Heart right ventricle (tissue), 16 donors: ENCODE measurements at regions of chr6 and their contacts with region 1.

Region 1: DNA sequence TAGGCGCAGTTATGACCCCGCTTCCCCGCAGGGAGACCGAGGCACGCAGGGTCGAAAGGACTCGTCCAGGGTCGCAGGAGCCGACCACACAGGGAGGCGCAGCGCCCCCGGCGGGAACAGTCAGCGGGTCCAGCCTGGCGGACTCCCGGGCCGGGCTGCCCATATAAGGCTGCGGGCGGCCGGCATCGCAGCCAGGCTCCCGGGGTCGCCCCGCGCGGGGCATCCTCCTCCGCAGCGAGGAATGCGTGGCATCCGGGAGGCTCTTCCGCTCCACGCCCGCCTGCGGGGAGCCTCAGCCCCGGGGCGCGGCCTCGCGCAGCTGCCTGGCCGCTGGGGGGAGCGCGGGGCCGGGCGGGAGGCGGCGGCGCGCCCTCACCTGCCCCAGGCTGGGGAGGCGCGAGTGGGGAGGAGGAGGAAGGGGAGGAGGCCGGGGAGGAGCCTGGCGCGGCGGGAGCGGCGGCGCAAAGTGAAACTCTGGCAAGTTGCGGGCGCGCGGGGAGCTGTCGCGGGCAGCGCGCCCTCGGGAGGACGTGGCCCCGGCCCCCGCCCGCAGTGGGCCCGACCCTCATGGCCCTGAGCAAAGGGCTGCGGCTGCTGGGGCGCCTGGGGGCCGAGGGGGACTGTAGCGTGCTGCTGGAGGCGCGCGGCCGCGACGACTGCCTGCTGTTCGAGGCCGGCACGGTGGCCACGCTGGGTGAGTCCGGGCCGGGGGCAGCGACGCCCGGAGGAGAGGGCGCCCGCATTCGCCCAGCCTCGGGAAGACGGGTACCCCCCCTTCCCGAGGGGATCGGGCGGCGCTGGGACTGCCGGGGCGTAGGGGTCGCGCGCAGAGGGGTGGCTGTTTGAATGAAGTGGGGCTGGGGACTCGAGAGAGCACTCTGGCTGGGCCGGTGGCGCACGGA is at the start of gene SYNJ2:
- DNase-seq: peak; percentile 78
- ATAC-seq: peak; percentile 84 to 91 (median 88)
- H3K4me3 ChIP-seq: peak within 1 kb of the TSS; percentile 71 to 99 (median 92)
- H3K27ac ChIP-seq: peak within 1 kb of the TSS; percentile 1 to 89 (median 84)
- H3K4me1 ChIP-seq: peaks cover 0 to 45% (median 10%) of the 10 kb centered on the region in 9 donors
- H3K27me3 ChIP-seq: peaks cover 0 to 5% (median 0%) of the 10 kb centered on the region in 7 donors
- CTCF ChIP-seq: peak; percentile 31 to 77 (median 59)
- total RNA-seq, gene SYNJ2: 14.0 to 27.8 (median 19.6) TPM

Region 2: GRCh38 chr6:158026054-158026900 is 44.6 kb after region 1 on chr6:
- intact Hi-C with region 1: loop called in 5 of 10 experiments (anchors 5 to 10 kb)
- DNase-seq: peak; percentile 81 to 92
- ATAC-seq: peak; percentile 80 to 89 (median 84)
- H3K4me3 ChIP-seq: peak overlapping the region in 7 of 10 donors; percentile 0 to 31 (median 27)
- H3K27ac ChIP-seq: peak overlapping the region; percentile 36 to 88 (median 80)
- H3K4me1 ChIP-seq: peaks cover 14 to 57% (median 42%) of the 10 kb centered on the region in 9 donors
- H3K27me3 ChIP-seq: no peaks in the 10 kb centered on the region
- CTCF ChIP-seq: peak; percentile 33 to 74 (median 61)

Region 3: DNA sequence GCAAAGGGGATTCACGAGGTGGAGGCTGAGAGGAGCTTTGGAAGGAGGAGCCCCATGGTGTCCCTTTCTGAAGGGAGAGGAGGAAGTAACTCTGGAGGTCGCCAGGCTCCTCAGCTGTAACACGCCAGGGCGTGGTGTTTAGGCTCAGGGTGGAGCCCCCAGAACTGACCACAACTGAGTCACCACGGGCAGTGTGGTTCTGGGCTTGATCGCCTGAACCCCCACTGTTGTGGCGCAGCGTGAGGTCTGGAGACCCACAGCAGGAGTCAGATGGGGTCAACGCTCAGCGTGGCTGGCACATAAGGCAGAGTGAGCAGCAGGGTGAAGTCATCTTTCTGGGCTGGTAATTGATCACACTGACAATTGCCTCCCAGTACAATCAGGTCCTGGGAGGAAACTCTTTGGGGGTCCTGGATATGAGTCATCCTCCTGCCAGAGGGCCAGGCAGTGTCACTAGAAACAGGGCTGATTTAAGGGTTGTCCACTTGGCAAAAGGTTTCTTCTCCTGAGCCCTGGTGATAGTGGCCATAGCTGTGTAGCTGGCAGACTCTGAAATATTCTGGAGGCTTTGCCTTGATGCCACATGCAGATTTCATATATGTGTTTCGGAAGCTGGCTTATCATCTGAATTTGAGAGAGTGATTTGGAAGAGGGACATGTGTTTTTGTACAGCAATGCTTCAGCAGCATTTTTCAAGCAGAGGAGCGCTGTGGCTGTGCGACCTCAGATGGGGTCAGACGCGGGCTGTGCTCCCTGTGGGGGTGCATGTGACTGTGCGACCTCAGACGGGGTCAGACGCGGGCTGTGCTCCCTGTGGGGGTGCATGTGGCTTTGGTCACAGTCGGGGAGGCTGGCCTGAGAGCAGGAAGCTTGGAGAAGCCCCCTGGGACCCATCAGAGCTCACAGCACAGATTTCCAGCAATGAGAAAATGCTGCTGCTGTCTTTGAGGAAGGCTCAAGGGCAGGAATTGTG is 50.0 kb after region 1 on chr6:
- intact Hi-C with region 1: loop called in 5 of 10 experiments (anchors 5 to 10 kb)
- DNase-seq: peak; percentile 77 to 88
- ATAC-seq: peak; percentile 74 to 91 (median 88)
- H3K4me3 ChIP-seq: no peak overlapping the region
- H3K27ac ChIP-seq: peak overlapping the region in 9 of 10 donors; percentile 40 to 86 (median 74)
- H3K4me1 ChIP-seq: peaks cover 23 to 65% (median 51%) of the 10 kb centered on the region in 9 donors
- H3K27me3 ChIP-seq: no peaks in the 10 kb centered on the region
- CTCF ChIP-seq: no peak

Region 4: DNA sequence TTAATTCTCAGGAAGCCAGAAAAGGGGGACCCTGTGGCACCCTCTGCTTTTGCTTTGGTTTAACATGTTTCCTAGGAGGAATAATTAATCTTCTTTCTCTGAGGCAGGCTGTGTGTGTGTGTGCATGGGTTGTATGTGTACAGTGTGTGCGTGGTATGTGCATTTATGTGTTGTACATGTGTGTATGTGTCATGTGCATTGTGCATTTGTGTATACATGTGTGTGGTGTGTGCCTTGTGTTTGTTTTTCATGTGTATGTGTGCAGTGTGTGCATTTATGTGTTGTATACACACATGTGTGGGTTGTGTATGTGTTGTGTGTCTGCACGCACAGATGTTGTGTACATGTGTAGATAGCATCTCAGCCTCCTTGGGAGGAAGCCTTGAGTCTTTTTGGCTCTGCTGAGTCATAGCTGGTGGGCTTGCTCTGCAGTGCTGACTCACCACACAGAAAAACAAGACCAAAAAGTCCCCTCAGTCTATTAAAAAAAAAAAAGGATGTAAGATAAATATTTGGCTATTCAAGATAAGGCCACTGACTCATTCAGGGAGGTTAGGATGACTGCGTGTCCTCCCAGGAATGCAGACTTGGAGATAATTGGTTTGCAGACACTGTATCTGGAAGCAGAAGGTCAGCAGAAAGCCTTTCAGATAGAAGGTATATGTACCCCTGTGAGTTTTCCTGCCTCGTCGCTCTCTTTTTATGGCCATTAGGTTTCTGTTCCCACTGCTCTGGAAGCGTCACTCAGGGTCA is 58.6 kb after region 1 on chr6:
- intact Hi-C with region 1: loop called in 3 of 10 experiments (anchors 5 to 10 kb)
- DNase-seq: no peak
- ATAC-seq: peak in 6 of 8 donors; percentile 4 to 30 (median 18)
- H3K4me3 ChIP-seq: no peak overlapping the region
- H3K27ac ChIP-seq: peak overlapping the region; percentile 9 to 96 (median 90)
- H3K4me1 ChIP-seq: peaks cover 24 to 70% (median 51%) of the 10 kb centered on the region in 9 donors
- H3K27me3 ChIP-seq: no peaks in the 10 kb centered on the region
- CTCF ChIP-seq: no peak

Region 5: GRCh38 chr6:159184559-159184958 is 1202.9 kb after region 1 on chr6:
- intact Hi-C with region 1: no loop called
- DNase-seq: no peak
- ATAC-seq: no peak
- H3K4me3 ChIP-seq: no peak overlapping the region
- H3K27ac ChIP-seq: no peak overlapping the region
- H3K4me1 ChIP-seq: no peaks in the 10 kb centered on the region
- H3K27me3 ChIP-seq: peaks cover 0 to 11% (median 3%) of the 10 kb centered on the region in 7 donors
- CTCF ChIP-seq: no peak